Activated T-helper 1 cell treated with anti-CD3 and anti-CD28 coated beads, Interleukin-12 subunit alpha, Interleukin-12 subunit beta, Interleukin-2, Interleukin-4 antibody, amounts not matched to agents 30 ng/mL and 10 ng/mL and 1 ng/mL, durations not matched to agents 14 hours and 24 hours and 36 hours (primary cell): ENCODE measurements at regions of chr2 and their contacts with region 1.

Region 1: DNA sequence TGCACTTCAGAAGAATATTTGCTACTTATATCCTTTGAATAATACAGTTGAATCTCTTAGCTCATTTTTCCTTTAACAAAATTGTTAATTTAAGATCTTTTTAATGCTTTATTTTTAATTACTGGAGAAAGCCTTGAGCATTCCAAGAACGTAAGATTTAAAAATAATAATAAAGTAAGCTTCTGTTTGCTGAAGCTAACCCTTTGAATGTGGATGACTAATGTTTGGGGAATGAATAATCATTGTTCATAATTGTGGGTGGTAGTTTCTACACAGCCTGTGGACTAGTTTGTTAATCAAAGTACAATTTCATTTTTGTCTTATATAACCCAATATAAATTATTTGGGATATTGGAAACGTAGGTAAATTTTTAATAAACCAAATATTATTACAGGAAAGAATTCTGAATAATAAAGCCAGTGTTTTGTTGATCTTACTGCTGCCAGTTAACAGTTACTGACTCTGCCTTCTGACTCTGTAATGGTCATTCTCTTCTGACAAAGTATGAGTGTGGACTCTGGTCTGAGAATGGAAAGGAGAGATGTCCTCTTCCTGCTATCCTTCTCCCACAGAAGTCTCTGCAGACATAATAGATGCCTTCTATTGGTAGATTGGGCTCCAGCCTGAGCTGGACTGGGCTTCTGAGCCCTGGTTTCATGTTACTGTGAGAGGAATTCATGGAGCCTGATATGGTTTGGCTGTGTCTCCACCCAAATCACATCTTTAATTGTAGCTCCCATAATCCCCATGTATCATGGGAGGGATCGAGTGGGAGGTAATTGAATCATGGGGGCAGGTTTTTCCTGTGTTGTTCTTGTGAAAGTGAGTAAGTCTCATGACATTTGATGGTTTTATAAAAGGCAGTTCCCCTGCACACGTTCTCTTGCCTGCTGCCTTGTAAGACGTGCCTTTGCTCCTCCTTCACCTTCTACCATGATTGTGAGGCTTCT is 292.7 kb upstream of the SLC39A10 start:
- DNase-seq: no peak
- H3K4me3 Mint-ChIP-seq: no peak overlapping the region
- H3K27ac Mint-ChIP-seq: no peak overlapping the region
- H3K4me1 Mint-ChIP-seq: peaks cover 20% of the 10 kb centered on the region
- H3K27me3 Mint-ChIP-seq: no peaks in the 10 kb centered on the region

Region 2: DNA sequence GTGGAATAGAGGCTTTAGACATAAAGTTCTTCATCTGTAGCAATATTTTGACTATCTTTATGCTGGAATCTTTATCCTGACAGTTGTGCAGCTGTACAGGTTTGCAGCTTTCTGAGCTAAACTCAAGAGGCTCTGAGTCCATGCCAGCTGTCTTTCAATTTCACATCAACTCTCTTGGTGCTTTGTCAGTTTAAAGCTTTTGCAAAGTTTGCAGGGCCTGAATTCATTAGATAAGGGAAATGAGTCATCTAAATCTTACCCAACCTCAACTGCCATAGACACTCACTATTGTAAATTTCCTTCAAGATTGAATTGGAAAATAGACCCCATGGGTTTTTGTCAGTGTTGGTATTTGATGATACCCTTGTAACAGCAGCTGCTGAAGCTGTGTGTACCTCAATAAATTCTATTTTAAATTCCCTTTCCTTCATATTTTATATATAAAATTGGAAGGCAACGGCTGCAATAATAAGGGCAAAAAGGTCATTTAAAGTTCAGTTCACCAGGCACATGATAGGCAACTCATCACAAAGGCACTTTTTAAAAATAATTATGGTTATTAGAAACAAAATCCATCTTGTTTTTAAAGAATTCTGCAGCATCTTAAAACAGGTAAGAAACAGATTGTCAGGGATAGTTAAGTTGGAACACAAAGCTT is 122.8 kb after region 1 on chr2:
- intact Hi-C with region 1: loop called (anchors 2 kb)
- DNase-seq: peak; percentile 26
- H3K4me3 Mint-ChIP-seq: peak overlapping the region; percentile 32
- H3K27ac Mint-ChIP-seq: peak overlapping the region; percentile 61
- H3K4me1 Mint-ChIP-seq: peaks cover 56% of the 10 kb centered on the region
- H3K27me3 Mint-ChIP-seq: no peaks in the 10 kb centered on the region

Region 3: GRCh38 chr2:195520671-195521155 is 156.4 kb after region 1 on chr2:
- intact Hi-C with region 1: no loop called
- DNase-seq: no peak
- H3K4me3 Mint-ChIP-seq: no peak overlapping the region
- H3K27ac Mint-ChIP-seq: no peak overlapping the region
- H3K4me1 Mint-ChIP-seq: peaks cover 30% of the 10 kb centered on the region
- H3K27me3 Mint-ChIP-seq: no peaks in the 10 kb centered on the region